ENCODE measurements at regions of chr17 and their contacts with region 1.

Region 1: DNA sequence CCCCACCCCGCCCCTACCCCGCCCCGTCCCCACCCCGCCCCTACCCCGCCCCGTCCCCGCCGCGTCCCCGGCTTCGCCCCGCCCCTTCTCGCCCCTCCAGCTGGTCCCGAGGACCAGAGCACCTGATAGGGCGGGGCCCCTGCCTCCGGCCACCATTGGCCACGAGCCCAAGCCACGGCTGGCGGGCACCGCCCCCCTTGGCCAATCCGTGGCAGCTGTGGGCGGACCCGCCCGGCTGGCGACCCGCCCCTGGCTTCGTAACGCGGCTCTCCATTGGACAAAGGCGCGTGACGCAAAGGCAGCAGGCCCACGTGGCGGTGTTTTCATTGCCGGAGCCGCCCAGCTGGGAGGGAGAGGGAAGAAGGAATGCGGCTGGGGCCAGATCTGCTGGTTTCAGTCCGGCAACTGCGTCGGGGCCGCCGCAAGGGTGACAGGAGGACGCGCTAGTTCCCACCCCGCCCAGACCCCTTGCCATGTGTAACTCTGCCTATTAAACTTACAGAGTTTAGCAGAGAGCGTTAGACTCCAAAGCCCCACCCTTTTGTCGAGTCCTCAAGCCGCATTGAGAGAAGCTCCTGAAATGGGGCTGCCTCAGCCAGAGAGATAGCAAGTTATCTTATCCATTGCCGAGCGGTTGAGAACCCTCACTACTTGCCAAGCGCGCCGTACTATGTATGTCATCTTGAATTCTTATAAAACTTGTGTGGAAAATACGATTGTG is 403 bp upstream of the WIPI1 start:
- DNase-seq: peak; percentile 98
- H3K4me3 Mint-ChIP-seq: peak overlapping the region; percentile 72
- H3K27ac Mint-ChIP-seq: peak overlapping the region; percentile 68
- H3K4me1 Mint-ChIP-seq: peaks cover 58% of the 10 kb centered on the region
- H3K27me3 Mint-ChIP-seq: no peaks in the 10 kb centered on the region

Region 2: GRCh38 chr17:68057531-68057952 is 400.2 kb before region 1 on chr17:
- CTCF ChIA-PET with region 1: interaction called, 3 read pairs
- POLR2A ChIA-PET with region 1: no interaction called
- intact Hi-C with region 1: loop called (anchors 2 kb)
- DNase-seq: peak; percentile 68
- H3K4me3 Mint-ChIP-seq: no peak overlapping the region
- H3K27ac Mint-ChIP-seq: no peak overlapping the region
- H3K4me1 Mint-ChIP-seq: peaks cover 23% of the 10 kb centered on the region
- H3K27me3 Mint-ChIP-seq: no peaks in the 10 kb centered on the region

Region 3: GRCh38 chr17:68205251-68205807 is 252.4 kb before region 1 on chr17:
- CTCF ChIA-PET with region 1: interaction called, 22 read pairs
- POLR2A ChIA-PET with region 1: interaction called, 3 read pairs
- intact Hi-C with region 1: loop called (anchors 2 kb)
- DNase-seq: peak; percentile 93
- H3K4me3 Mint-ChIP-seq: peak overlapping the region; percentile 81
- H3K27ac Mint-ChIP-seq: peak overlapping the region; percentile 89
- H3K4me1 Mint-ChIP-seq: peaks cover 32% of the 10 kb centered on the region
- H3K27me3 Mint-ChIP-seq: no peaks in the 10 kb centered on the region

Region 4: GRCh38 chr17:68291844-68292695 is 165.6 kb before region 1 on chr17:
- CTCF ChIA-PET with region 1: interaction called, 4 read pairs
- POLR2A ChIA-PET with region 1: interaction called, 8 read pairs
- intact Hi-C with region 1: loop called (anchors 1 kb)
- DNase-seq: peak; percentile 91
- H3K4me3 Mint-ChIP-seq: peak overlapping the region; percentile 82
- H3K27ac Mint-ChIP-seq: peak overlapping the region; percentile 88
- H3K4me1 Mint-ChIP-seq: peaks cover 63% of the 10 kb centered on the region
- H3K27me3 Mint-ChIP-seq: no peaks in the 10 kb centered on the region

Region 5: DNA sequence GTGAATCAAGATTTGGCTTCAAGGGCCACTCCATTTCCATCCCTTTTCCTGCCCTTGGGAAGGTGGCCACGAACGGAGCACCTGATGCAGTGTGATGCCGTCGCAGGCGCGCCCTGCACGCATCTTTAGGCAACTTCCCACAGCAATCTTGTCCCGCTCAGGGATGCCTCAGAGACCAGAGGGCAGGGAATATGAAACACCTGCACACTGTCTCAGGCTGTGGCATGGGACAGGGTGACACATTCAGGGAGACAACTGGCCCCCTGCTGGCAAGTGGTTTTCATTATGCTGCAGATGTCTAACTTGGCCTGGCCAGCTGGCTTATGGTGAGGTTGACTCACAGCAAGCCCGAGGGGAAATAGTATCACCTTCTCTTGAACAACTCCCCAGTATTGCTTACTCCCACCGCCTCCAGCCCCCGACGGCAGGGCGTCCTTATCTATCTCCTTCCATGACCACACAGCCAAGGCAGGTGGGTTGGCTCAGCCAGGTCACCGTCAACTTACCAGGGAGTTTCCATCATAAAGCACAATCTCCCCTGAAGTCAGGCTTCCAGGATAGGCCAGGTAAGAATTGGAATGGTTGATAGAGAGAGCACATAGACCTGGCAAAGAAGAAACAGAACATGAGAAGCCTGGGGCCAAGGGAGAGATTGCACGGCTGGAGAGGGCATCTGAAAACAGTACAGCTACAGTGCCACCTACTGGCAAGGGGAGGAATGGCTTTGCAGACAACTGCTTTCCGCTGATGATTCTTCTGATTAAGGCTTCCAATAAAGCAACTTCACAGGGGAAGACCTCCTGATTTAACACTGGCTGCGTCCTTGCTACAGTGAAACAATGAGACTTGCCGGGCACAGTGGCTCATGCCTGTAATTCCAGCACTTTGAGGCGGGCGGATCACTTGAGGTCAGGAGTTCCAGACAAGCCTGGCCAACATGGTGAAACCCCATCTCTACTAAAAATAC is 21.5 kb before region 1 on chr17:
- CTCF ChIA-PET with region 1: interaction called, 34 read pairs
- POLR2A ChIA-PET with region 1: interaction called, 11 read pairs
- intact Hi-C with region 1: no loop called
- DNase-seq: peak; percentile 90
- H3K4me3 Mint-ChIP-seq: peak overlapping the region; percentile 38
- H3K27ac Mint-ChIP-seq: peak overlapping the region; percentile 79
- H3K4me1 Mint-ChIP-seq: peaks cover 51% of the 10 kb centered on the region
- H3K27me3 Mint-ChIP-seq: no peaks in the 10 kb centered on the region

Region 6: GRCh38 chr17:68491381-68492231 is 33.9 kb after region 1 on chr17:
- CTCF ChIA-PET with region 1: no interaction called
- POLR2A ChIA-PET with region 1: no interaction called
- intact Hi-C with region 1: no loop called
- DNase-seq: no peak
- H3K4me3 Mint-ChIP-seq: no peak overlapping the region
- H3K27ac Mint-ChIP-seq: no peak overlapping the region
- H3K4me1 Mint-ChIP-seq: peaks cover 12% of the 10 kb centered on the region
- H3K27me3 Mint-ChIP-seq: no peaks in the 10 kb centered on the region

Region 7: GRCh38 chr17:68519911-68520310 is 62.2 kb after region 1 on chr17:
- CTCF ChIA-PET with region 1: no interaction called
- POLR2A ChIA-PET with region 1: no interaction called
- intact Hi-C with region 1: no loop called
- DNase-seq: no peak
- H3K4me3 Mint-ChIP-seq: no peak overlapping the region
- H3K27ac Mint-ChIP-seq: no peak overlapping the region
- H3K4me1 Mint-ChIP-seq: peaks cover 45% of the 10 kb centered on the region
- H3K27me3 Mint-ChIP-seq: no peaks in the 10 kb centered on the region

Measured in activated CD4-positive, alpha-beta memory T cell treated with anti-CD3 and anti-CD28 coated beads for 36 hours (primary cell).